ENCODE measurements at regions of chr19 and their contacts with region 1.

Region 1: DNA sequence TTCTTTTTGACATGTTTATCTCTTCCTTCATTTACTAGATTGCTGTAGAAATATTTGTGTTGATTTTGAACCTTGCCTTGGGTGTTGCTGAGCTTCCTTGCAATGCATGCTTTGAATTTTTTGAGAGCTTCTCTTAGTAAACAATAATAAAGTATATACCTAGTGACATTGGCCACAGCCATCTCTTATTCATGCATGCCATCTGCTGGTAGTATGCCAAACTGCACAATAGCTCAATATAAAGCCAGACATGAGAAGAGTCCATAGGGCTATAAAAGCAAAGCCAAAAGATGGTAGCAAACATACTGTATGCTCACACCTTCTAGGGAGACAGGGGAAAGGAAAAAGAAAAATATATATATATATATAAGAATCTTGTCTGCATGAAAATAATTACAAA is 18.9 kb upstream of the ZSCAN5A start:
- DNase-seq: peak; percentile 69
- H3K4me3 ChIP-seq: no peak overlapping the region
- H3K27ac ChIP-seq: no peak overlapping the region
- H3K4me1 ChIP-seq: no peaks in the 10 kb centered on the region
- H3K27me3 ChIP-seq: peaks cover 0 to 1% of the 10 kb centered on the region in 2 experiments
- CTCF ChIP-seq: peak; percentile 48 to 66
- POLR2A ChIP-seq: no peak

Region 2: DNA sequence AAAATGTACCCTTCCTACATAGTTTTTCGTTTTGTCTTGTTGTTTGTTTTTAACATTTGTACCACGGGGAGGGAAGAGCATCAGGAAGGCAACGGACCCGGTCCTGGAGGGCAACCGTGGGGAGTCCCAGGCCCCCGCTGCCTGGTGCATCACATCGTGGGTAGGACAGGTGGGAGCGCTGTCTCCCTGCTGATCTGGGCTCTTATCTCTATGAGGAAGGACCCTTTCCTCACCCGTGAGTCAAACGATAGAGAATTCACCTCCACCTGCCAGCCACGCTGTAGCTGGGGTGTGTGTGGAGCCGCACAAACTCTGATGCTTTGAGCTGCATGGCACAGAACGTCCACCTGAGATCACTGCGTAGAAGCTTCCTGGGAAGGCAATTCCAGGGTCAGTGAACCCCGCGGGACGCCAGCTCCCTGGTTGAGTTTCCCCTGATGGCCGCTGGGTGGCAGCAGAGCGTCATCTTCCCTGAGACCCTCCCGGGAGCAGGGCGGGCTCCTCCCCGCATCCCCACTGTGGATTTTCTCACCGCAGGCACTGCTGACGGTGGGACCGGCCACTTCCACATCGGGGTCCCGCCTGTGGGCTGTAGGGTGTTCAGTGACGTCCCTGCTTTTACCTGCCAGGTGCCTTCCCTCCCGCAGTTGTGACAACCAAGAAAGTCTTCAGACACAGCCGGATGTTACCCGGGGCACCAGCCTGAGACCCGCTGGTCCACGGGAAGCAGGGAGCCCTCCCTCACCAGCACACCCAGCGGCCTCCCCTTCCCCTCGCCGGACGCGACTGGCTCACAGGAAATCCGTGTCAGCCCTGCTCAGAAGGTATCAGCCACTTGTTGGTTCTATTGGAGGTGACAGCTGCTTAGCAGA is 267.1 kb before region 1 on chr19:
- CTCF ChIA-PET with region 1: interaction called, 144 read pairs
- POLR2A ChIA-PET with region 1: no interaction called
- dilution Hi-C with region 1: no loop called
- intact Hi-C with region 1: loop called (anchors 1 kb)
- DNase-seq: peak; percentile 54
- H3K4me3 ChIP-seq: peak overlapping the region in 2 of 3 experiments; percentile 20 to 32
- H3K27ac ChIP-seq: no peak overlapping the region
- H3K4me1 ChIP-seq: peaks cover 7% of the 10 kb centered on the region
- H3K27me3 ChIP-seq: no peaks in the 10 kb centered on the region
- CTCF ChIP-seq: peak; percentile 91 to 95
- POLR2A ChIP-seq: no peak

Region 3: GRCh38 chr19:56155124-56155687 is 178.3 kb before region 1 on chr19:
- CTCF ChIA-PET with region 1: interaction called, 11 read pairs
- POLR2A ChIA-PET with region 1: no interaction called
- dilution Hi-C with region 1: no loop called
- intact Hi-C with region 1: no loop called
- DNase-seq: no peak
- H3K4me3 ChIP-seq: no peak overlapping the region
- H3K27ac ChIP-seq: no peak overlapping the region
- H3K4me1 ChIP-seq: peaks cover 10% of the 10 kb centered on the region
- H3K27me3 ChIP-seq: no peaks in the 10 kb centered on the region
- CTCF ChIP-seq: peak; percentile 24 to 40
- POLR2A ChIP-seq: no peak

Region 4: GRCh38 chr19:56261145-56261544 is 72.4 kb before region 1 on chr19:
- CTCF ChIA-PET with region 1: interaction called, 761 read pairs
- POLR2A ChIA-PET with region 1: no interaction called
- dilution Hi-C with region 1: no loop called
- intact Hi-C with region 1: no loop called
- DNase-seq: peak; percentile 13
- H3K4me3 ChIP-seq: no peak overlapping the region
- H3K27ac ChIP-seq: peak overlapping the region; percentile 6
- H3K4me1 ChIP-seq: peaks cover 6% of the 10 kb centered on the region
- H3K27me3 ChIP-seq: no peaks in the 10 kb centered on the region
- CTCF ChIP-seq: no peak
- POLR2A ChIP-seq: no peak

Region 5: DNA sequence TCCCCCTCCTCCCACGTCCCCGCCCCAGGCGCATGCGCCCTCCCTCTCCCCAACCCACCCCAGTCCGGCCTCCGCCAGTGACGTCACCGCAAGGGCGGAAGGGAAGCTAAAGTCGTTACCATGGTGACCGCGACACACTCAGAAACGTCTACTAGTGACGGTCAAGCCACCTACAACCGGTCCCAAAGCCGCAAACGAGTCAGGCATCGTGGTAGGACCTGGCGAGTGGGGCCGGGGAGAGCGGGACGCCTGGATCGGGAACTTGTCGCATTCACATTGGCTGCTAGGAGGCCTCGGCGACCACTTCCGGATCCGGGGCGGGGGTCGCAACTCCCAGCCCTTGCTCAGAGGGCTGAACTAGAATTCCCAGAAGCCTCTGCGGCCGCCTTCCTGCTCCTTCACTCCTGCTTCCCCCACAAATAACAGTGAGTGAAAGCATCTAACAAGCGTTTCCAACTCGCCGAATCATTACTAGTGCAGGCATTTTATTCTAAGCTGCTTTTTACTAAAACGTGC is 18.9 kb before region 1 on chr19 and contains the start of gene ZSCAN5A:
- CTCF ChIA-PET with region 1: interaction called, 84 read pairs
- POLR2A ChIA-PET with region 1: no interaction called
- dilution Hi-C with region 1: no loop called
- intact Hi-C with region 1: no loop called
- DNase-seq: peak; percentile 98
- H3K4me3 ChIP-seq: peak within 1 kb of the TSS; percentile 66 to 89 (median 76)
- H3K27ac ChIP-seq: peak within 1 kb of the TSS; percentile 98
- H3K4me1 ChIP-seq: peaks cover 12% of the 10 kb centered on the region
- H3K27me3 ChIP-seq: no peaks in the 10 kb centered on the region
- CTCF ChIP-seq: no peak
- POLR2A ChIP-seq: peak; percentile 54
- total RNA-seq, gene ZSCAN5A: 12.0 and 12.2 TPM in 2 replicates